SK-N-SH (cell line): ENCODE measurements at regions of chr12 and their contacts with region 1.

Region 1: GRCh38 chr12:113098446-113098896 is 37.1 kb downstream of the RASAL1 start:
- DNase-seq: peak; percentile 92
- H3K4me3 ChIP-seq: peak overlapping the region in 1 of 2 experiments; percentile 5; a peak in 1 of 4 replicates
- H3K27ac ChIP-seq: peak overlapping the region in 1 of 2 experiments; percentile 71; a peak in 1 of 4 replicates
- H3K4me1 ChIP-seq: peaks cover 0 to 14% of the 10 kb centered on the region in 2 experiments; a peak in 1 of 4 replicates
- H3K27me3 ChIP-seq: no peaks in the 10 kb centered on the region
- CTCF ChIP-seq: peak; percentile 77
- EP300 ChIP-seq: no peak
- RAD21 ChIP-seq: peak; percentile 80

Region 2: DNA sequence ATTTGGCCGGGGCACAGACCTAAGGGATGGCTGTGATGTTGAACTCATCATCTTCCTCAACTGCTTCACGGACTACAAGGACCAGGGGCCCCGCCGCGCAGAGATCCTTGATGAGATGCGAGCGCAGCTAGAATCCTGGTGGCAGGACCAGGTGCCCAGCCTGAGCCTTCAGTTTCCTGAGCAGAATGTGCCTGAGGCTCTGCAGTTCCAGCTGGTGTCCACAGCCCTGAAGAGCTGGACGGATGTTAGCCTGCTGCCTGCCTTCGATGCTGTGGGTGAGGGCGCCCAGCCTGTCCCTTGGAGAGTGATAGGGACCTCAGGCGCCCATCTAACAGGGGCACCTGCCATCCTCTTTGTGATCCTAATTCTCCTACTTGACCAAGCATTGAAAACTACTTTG is 147.8 kb before region 1 on chr12:
- CTCF ChIA-PET with region 1: no interaction called
- POLR2A ChIA-PET with region 1: no interaction called
- DNase-seq: peak; percentile 67
- H3K4me3 ChIP-seq: no peak overlapping the region
- H3K27ac ChIP-seq: peak overlapping the region in 1 of 2 experiments; percentile 74; a peak in 2 of 4 replicates
- H3K4me1 ChIP-seq: peaks cover 0 to 16% of the 10 kb centered on the region in 2 experiments; a peak in 2 of 4 replicates
- H3K27me3 ChIP-seq: no peaks in the 10 kb centered on the region
- CTCF ChIP-seq: no peak
- EP300 ChIP-seq: peak in 1 of 2 experiments; percentile 27; a peak in 1 of 4 replicates
- RAD21 ChIP-seq: peak; percentile 16; the same call in 1 of the 2 replicates

Region 3: GRCh38 chr12:113048716-113049127 is 49.7 kb before region 1 on chr12:
- CTCF ChIA-PET with region 1: interaction called, 38 read pairs
- POLR2A ChIA-PET with region 1: interaction called, 3 read pairs
- DNase-seq: peak; percentile 81
- H3K4me3 ChIP-seq: no peak overlapping the region; a peak in 1 of 4 replicates
- H3K27ac ChIP-seq: no peak overlapping the region
- H3K4me1 ChIP-seq: no peaks in the 10 kb centered on the region
- H3K27me3 ChIP-seq: 0 out of 2 replicates have a peak, but pooled peaks cover 7% of the 10 kb centered on the region
- CTCF ChIP-seq: peak; percentile 91
- EP300 ChIP-seq: no peak
- RAD21 ChIP-seq: peak; percentile 91

Region 4: DNA sequence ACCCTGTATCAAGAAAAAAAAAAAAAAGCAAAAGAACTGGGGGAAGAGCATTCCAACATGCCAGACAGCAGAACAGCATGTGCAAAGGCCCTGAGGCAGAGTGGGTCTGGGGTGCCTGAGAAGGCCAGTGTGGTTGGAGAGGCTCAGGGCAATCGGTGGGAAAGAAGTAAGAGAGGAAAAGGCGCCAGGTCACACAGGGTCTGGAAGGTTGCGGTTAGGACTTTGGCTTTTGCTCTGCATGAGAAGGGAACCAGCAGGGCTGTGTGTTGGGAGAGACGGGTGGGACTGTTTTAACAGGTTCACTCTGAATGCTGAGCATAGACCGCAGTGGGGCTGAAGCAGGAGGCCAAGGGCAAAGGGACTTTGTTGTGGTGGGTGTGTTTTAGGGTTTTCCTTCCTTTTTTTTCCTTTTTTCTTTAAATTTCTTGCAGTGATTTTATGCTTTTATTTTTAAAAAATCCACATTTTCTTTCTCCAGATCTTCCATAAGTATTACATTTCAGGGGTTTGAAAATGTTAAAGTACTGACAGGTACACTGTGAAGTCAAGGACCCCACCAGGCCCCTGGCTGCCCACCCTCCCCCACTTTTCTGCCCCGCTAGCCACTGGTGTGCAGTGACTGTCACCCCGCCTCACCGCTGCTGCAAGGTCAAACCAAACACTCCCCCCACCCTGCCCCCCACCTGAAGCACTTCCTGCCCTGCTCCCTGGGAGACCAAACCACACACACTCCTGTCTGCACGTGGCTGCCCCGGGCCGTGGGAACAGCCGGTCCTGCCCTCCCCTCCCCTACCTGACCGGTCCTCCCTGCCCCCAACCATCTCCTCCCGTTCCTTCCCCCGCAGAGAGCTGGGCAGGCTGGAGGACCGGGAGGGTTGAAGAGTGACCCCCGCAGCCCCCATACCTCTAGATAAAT is 12.0 kb before region 1 on chr12:
- CTCF ChIA-PET with region 1: interaction called, 27 read pairs
- POLR2A ChIA-PET with region 1: no interaction called
- DNase-seq: no peak
- H3K4me3 ChIP-seq: no peak overlapping the region
- H3K27ac ChIP-seq: no peak overlapping the region
- H3K4me1 ChIP-seq: no peaks in the 10 kb centered on the region; a peak in 1 of 4 replicates
- H3K27me3 ChIP-seq: no peaks in the 10 kb centered on the region
- CTCF ChIP-seq: no peak
- EP300 ChIP-seq: no peak
- RAD21 ChIP-seq: no peak

Region 5: DNA sequence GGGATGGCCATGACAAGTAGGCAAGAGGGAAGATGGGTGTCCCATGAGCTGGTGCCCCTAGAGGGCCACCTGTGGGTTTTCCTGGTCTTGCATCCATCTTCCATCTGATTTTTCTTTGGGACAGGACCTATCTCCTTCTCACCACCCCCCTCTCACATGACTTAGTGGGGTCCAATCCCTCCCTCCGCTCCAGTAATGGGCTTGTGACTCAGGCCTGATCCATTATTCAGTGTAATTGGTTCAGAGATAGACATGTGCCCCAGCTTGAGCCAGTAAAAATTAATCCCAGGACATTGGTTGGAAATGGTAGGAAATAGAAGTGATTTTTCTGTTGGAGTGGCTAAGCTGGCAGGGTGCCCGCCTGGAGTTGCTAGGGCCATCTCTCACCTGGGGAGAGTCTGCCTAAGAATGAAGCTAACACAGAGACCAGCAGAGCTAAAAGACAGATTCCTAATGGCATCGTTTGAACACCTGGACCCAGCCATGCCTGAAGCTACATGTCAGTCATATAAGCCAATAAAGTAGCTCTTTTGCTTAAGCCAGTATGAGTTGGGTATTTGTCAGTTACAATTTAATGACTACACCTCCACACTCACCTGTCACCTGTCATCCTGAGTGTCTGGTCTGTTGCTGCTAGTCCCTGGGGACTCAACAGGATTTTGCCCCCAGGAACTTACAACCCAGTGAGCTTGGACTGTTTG is 22.3 kb after region 1 on chr12:
- CTCF ChIA-PET with region 1: interaction called, 12 read pairs
- POLR2A ChIA-PET with region 1: no interaction called
- DNase-seq: peak; percentile 51
- H3K4me3 ChIP-seq: no peak overlapping the region
- H3K27ac ChIP-seq: no peak overlapping the region
- H3K4me1 ChIP-seq: peaks cover 0 to 7% of the 10 kb centered on the region in 2 experiments; a peak in 1 of 4 replicates
- H3K27me3 ChIP-seq: no peaks in the 10 kb centered on the region; the same call in 1 of the 2 replicates
- CTCF ChIP-seq: no peak
- EP300 ChIP-seq: no peak
- RAD21 ChIP-seq: no peak

Region 6: DNA sequence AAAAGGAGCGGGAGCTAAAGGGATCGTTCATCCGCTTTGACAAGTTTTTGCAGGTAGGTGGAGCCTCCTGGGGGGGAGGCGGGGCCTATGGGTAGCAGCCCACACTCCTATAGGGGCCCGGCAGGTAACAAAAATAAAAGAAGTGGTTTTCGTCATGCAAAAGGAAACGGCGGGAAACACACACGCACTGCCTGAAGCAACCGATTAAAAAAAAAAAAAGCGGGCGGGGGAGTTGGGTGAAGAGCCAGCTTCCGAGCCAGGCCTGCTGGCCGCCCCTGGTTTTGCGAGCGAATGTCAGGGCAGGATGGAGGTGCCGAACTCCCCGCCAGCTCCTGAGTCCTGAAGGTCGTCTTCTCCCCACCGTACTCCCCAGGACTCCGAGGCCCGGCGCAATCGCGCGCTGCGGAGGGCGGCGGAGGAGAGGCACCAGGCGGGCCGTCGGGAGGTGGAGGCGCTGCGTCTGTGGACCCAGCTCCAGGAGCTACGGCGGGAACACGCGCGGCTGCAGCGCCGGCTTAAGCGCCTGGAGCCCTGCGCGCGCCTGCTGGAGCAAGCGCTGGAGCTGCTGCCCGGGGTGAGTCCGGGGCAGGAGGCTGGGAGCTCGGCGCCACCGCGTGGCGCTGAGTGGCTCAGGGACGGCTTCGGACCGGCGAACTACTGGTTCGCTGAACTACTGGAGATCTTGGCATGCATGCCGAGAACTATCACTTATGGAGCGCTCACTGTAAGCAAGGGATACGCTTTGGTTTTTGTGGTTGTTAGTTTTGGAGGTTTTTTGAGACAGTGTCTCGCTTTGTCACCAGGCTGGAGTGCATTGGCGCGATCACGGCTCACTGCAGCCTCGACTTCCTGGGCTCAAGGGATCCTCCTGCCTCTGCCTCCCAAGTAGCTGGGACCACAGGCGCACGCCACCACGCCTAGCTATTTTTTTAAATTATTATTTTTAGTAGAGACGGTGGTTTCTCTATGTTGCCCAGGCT is 54.7 kb after region 1 on chr12:
- CTCF ChIA-PET with region 1: interaction called, 18 read pairs
- POLR2A ChIA-PET with region 1: no interaction called
- DNase-seq: peak; percentile 93
- H3K4me3 ChIP-seq: peak overlapping the region; percentile 34 to 56; a peak in 3 of 4 replicates
- H3K27ac ChIP-seq: no peak overlapping the region
- H3K4me1 ChIP-seq: peaks cover 5 to 11% of the 10 kb centered on the region in 2 experiments; a peak in 2 of 4 replicates
- H3K27me3 ChIP-seq: peaks cover 24% of the 10 kb centered on the region
- CTCF ChIP-seq: peak; percentile 53
- EP300 ChIP-seq: no peak
- RAD21 ChIP-seq: peak; percentile 69

Region 7: DNA sequence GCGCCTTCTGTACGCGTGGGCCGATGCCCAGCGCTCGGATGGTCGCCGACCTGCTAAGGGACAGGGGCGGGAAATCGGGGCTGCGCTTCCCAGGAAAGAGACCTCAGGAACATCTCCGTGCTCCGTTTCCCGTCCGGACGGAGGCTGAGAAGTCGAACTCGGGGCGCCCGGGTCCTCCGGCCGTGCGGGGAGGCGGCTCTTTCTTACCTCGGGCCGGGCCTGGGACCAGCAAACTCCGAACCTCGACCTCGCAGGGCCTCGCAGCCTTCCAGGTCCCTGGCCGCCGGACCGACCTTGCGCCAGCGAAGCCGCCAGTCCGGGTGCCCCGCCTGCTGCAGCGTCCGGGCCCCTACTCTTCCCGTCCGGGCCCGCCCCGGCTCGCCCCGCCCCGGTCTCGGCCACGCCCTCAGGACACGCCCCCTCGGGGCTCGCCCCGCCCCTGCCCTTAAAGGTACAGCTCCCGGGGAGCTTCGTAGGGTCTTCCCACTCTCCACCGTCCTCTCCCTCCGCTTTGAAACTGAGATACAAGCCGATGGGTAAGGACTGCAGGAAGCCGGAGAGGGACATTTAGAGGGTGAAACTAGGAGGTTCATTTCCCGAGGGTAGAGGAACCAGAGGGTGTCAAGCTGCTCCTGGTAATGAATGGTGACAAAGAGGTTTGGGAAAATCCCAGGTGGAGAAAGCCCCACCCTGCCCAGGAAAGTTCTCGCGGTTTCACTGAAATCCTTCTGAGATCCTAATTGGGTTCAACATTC is 236.5 kb after region 1 on chr12 and contains the start of gene SLC8B1:
- CTCF ChIA-PET with region 1: no interaction called
- POLR2A ChIA-PET with region 1: no interaction called
- DNase-seq: peak; percentile 99
- H3K4me3 ChIP-seq: peak within 1 kb of the TSS; percentile 63 to 76
- H3K27ac ChIP-seq: peak within 1 kb of the TSS in 1 of 2 experiments; percentile 51; a peak in 1 of 4 replicates
- H3K4me1 ChIP-seq: peaks cover 0 to 13% of the 10 kb centered on the region in 2 experiments; a peak in 1 of 4 replicates
- H3K27me3 ChIP-seq: no peaks in the 10 kb centered on the region
- CTCF ChIP-seq: no peak
- EP300 ChIP-seq: no peak
- RAD21 ChIP-seq: no peak
- polyA plus RNA-seq, gene SLC8B1: 12.0 and 12.9 TPM in 2 replicates